B cell (primary cell): ENCODE measurements at regions of chr7 and their contacts with region 1.

Region 1: DNA sequence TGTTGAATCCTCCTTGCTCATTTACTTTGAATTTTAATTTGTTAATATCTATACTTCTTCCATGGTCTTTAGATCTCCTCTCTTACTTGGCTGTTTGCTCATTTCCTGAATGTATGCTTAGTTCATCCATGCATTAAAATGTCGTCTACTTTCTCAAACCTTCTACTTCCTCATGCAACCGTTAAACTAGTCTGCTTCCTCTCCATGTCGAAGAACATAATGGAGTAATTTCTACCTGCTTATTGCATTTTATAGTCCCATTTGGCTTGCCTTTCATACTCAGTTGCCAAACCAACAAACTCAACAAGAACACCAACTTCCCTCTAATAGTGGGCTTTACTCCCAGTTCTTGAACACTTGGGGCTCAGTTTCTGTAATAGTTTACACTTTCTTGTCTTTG is 43.8 kb upstream of the SEMA3D start:
- DNase-seq: peak; percentile 62
- ATAC-seq: peak; percentile 60
- H3K4me3 ChIP-seq: peak overlapping the region in 3 of 5 experiments; percentile 3 to 41 (median 15)
- H3K4me3 Mint-ChIP-seq: peak overlapping the region; percentile 57
- H3K27ac ChIP-seq: peak overlapping the region; percentile 36 to 76
- H3K27ac Mint-ChIP-seq: peak overlapping the region; percentile 23
- H3K4me1 ChIP-seq: peaks cover 4 to 19% of the 10 kb centered on the region in 2 donors
- H3K4me1 Mint-ChIP-seq: peaks cover 17% of the 10 kb centered on the region
- H3K27me3 ChIP-seq: no peaks in the 10 kb centered on the region
- H3K27me3 Mint-ChIP-seq: no peaks in the 10 kb centered on the region
- CTCF ChIP-seq: no peak

Region 2: DNA sequence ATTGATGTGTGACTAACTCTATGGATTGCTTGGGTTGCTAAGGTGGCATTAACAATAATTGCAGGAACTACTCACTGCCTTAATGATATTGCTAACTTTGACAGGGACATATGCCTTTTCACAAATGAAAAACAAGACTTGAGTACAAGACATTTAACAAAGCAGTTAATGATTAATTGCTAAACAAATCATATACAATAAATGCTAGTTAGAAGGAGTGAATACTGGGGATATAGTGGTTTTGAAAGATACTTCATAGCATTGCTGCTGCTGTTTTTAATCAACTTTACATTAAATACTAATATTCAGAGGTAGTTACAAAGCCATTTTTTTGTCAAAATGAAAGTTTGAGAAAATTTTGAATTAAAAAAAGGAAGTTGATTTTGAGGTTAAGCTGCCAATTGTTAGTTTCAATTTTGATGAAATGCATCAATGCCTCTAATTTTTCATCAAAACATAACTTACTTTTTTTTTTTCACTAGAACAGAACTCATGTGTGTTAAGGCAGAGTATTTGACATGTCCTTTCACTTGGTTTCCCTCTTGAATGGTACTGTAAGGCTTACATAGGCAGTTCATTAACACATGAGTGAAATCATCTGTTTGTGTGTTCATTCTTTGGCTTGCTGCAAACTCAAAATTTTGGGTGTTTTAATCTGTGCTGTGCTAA is 62.4 kb after region 1 on chr7:
- CTCF ChIA-PET with region 1: no interaction called
- POLR2A ChIA-PET with region 1: no interaction called
- intact Hi-C with region 1: loop called (anchors 2 kb)
- DNase-seq: peak; percentile 65
- ATAC-seq: peak; percentile 69
- H3K4me3 ChIP-seq: peak overlapping the region in 1 of 5 experiments; percentile 21
- H3K4me3 Mint-ChIP-seq: peak overlapping the region; percentile 78
- H3K27ac ChIP-seq: peak overlapping the region; percentile 52 to 72
- H3K27ac Mint-ChIP-seq: peak overlapping the region; percentile 93
- H3K4me1 ChIP-seq: peaks cover 43 to 61% of the 10 kb centered on the region in 2 donors
- H3K4me1 Mint-ChIP-seq: peaks cover 57% of the 10 kb centered on the region
- H3K27me3 ChIP-seq: no peaks in the 10 kb centered on the region
- H3K27me3 Mint-ChIP-seq: no peaks in the 10 kb centered on the region
- CTCF ChIP-seq: no peak